Activated CD4-positive, alpha-beta memory T cell treated with anti-CD3 and anti-CD28 coated beads, Interleukin-2, amount 10 ng/mL, durations not matched to agents 7 days and 5 days (primary cell): ENCODE measurements at regions of chr10 and their contacts with region 1.

Region 1: DNA sequence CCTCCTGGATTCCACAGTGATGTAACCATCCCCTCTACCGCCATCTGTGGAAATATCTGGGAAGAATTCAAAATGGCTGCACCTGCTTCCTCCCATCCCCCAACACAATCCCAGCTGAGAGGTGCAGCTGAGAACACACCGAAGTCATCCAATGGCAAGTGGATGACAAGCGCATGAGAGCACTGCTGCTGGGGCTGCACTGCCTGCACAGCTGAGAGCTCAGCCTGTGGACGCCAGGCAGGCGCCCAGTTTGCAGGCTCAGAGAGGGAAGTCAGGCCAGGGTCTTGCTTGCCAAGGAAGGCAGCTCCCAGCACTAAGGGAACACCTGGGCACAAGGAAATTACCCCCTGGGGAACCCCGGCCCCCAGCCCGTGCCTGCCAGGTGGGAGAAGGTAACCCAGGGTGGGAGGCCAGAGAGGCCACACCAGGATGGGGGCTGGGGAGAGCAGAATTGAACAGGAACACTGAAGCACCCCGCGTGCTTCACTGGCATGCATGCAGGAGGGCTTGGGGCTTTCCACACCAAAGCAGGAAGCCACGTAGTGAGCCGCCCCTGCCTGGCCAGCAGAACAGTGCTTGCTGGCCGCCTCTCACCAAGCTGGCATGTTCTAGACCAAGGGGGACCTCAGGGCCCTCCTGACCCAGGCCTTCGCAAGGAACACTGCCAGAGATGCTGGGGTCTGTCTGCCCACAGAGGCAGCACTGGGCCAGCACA is 46.2 kb downstream of the FAM53B start:
- DNase-seq: peak; percentile 57
- H3K4me3 Mint-ChIP-seq: no peak overlapping the region
- H3K27ac Mint-ChIP-seq: peak overlapping the region; percentile 96
- H3K4me1 Mint-ChIP-seq: peaks cover 98% of the 10 kb centered on the region
- H3K27me3 Mint-ChIP-seq: no peaks in the 10 kb centered on the region

Region 2: GRCh38 chr10:124508070-124508667 is 189.8 kb before region 1 on chr10:
- CTCF ChIA-PET with region 1: no interaction called
- POLR2A ChIA-PET with region 1: no interaction called
- DNase-seq: no peak
- H3K4me3 Mint-ChIP-seq: no peak overlapping the region
- H3K27ac Mint-ChIP-seq: no peak overlapping the region
- H3K4me1 Mint-ChIP-seq: peaks cover 4% of the 10 kb centered on the region
- H3K27me3 Mint-ChIP-seq: no peaks in the 10 kb centered on the region

Region 3: GRCh38 chr10:124671486-124672075 is 26.4 kb before region 1 on chr10:
- CTCF ChIA-PET with region 1: interaction called, 11 read pairs
- POLR2A ChIA-PET with region 1: interaction called, 6 read pairs
- DNase-seq: no peak
- H3K4me3 Mint-ChIP-seq: no peak overlapping the region
- H3K27ac Mint-ChIP-seq: peak overlapping the region; percentile 76
- H3K4me1 Mint-ChIP-seq: peaks cover 71% of the 10 kb centered on the region
- H3K27me3 Mint-ChIP-seq: no peaks in the 10 kb centered on the region

Region 4: DNA sequence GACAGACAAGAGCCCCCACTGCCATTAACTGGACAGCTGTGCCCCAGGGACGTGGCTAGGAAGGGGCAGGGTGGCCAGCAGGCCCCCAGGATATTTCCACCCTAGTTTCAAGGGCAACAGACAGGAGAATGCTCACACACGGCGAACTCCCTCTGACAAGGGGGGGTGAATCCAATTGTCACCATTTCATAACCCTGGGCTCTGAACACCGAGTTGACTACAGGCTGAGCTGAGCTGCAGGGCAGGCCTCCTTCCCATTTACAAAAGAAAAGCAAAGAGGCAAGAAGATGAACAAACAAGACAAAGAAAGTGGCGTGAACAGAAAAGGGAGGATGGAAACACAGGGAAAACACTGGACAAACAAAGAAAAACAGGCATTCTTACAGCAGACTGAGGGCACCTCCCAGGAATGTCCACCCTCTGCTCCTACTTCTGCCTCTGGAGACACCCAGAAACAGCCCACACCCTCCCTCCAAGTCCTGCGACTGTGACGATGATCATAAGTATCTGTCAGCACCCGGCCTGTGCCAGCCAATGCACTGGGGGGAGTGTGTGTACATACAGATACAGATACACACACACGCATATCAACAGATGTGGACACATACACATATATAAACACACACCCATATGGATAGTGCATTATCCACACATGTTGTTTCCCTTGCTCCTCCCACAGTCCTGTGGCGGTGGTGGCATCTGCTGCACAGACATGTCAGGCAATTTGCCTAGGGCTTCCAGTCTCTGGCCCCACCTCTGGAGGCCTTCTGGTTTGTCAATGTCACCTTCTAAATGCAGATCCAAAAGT is 20.0 kb before region 1 on chr10:
- CTCF ChIA-PET with region 1: interaction called, 4 read pairs
- POLR2A ChIA-PET with region 1: interaction called, 17 read pairs
- DNase-seq: no peak
- H3K4me3 Mint-ChIP-seq: no peak overlapping the region
- H3K27ac Mint-ChIP-seq: peak overlapping the region; percentile 91
- H3K4me1 Mint-ChIP-seq: peaks cover 68% of the 10 kb centered on the region
- H3K27me3 Mint-ChIP-seq: no peaks in the 10 kb centered on the region

Region 5: DNA sequence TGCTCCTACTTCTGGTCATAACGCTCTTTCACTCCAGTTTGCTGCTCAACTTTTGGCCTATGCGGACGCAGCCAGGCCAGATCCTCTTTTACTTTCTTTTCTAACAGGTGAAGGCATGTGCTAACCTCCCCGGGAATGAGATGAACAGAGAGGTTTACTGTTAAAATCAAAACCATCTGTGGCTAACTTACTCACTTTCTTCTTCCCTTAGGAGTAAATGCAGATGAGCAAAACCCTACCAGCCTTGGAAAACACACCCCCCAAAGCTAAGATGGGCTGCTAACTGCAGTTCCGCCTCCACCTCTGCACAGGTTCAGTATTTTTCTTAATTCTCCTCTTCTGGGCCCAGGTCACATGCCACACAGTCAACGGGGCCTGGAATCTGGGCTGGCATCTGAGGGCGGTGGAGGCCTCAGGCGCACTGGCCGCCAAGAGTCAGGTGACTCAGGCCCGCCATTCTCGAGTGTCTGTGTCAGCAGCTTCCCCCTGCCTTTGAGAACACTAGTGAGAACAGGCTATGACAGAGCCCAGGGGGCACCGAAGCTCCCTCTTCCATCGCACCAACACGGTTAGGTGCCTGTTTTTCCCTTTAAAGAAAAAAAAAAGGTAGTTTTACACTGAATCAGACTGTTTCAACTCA is 35.1 kb after region 1 on chr10:
- CTCF ChIA-PET with region 1: interaction called, 3 read pairs
- POLR2A ChIA-PET with region 1: interaction called, 22 read pairs
- DNase-seq: peak; percentile 72
- H3K4me3 Mint-ChIP-seq: peak overlapping the region; percentile 66
- H3K27ac Mint-ChIP-seq: peak overlapping the region; percentile 88
- H3K4me1 Mint-ChIP-seq: peaks cover 97% of the 10 kb centered on the region
- H3K27me3 Mint-ChIP-seq: no peaks in the 10 kb centered on the region